Natural killer cell (primary cell): ENCODE measurements at regions of chrX and their contacts with region 1.

Region 1: GRCh38 chrX:118603981-118604380 is 108.4 kb downstream of the DOCK11 start:
- DNase-seq: peak; percentile 14 to 68
- ATAC-seq: peak; percentile 69 to 83 (median 69)
- H3K4me3 ChIP-seq: no peak overlapping the region
- H3K4me3 Mint-ChIP-seq: no peak overlapping the region
- H3K27ac ChIP-seq: no peak overlapping the region
- H3K27ac Mint-ChIP-seq: peak overlapping the region; percentile 45 to 85
- H3K4me1 ChIP-seq: no peaks in the 10 kb centered on the region
- H3K4me1 Mint-ChIP-seq: peaks cover 8 to 21% of the 10 kb centered on the region in 2 donors
- H3K27me3 ChIP-seq: no peaks in the 10 kb centered on the region
- H3K27me3 Mint-ChIP-seq: no peaks in the 10 kb centered on the region
- CTCF ChIP-seq: peak; percentile 66

Region 2: DNA sequence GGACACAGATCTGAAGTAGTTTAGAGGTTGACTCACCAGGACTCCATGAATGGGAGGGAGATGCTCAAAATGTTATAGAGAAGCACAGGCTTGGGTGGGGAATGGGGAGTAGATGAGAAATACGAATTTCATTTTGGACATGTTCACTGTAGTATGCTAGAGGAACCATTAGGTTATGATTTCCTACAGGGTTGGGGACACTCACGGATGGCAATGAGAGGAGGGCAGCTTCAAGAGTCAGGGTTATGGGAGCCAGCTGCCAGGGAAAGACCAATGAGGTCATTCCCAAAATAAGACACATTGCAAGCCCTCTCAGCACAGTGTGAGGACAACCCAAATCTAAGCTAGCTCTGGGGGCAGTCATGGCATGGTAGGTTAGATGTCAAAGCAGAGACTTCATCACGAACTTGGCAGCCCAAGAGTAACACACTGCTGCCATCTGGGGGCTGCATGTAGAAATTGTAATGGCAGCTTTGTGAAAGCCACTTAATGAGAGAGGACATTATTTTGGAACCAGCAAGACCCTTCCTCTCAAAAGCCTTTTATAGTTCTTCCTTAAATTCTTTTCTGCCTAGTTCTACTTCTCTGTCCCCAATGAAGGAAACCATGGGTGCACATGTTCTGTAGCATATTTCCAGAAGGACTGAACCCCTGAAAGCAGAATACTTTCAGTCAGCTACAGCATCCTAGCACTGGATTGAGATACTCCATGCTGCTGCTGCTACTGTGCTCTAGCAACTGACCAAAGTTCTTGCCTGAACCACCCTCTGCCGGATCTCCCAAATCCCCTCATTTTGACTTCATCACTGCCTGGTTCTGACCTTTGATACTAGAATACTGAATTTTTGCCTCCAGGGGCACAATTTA is 203.4 kb after region 1 on chrX:
- intact Hi-C with region 1: loop called (anchors 10 kb)
- DNase-seq: peak in 1 of 2 donors; percentile 62
- ATAC-seq: peak in 2 of 3 donors; percentile 42 to 67
- H3K4me3 ChIP-seq: no peak overlapping the region
- H3K4me3 Mint-ChIP-seq: no peak overlapping the region
- H3K27ac ChIP-seq: no peak overlapping the region
- H3K27ac Mint-ChIP-seq: no peak overlapping the region
- H3K4me1 ChIP-seq: no peaks in the 10 kb centered on the region
- H3K4me1 Mint-ChIP-seq: no peaks in the 10 kb centered on the region
- H3K27me3 ChIP-seq: no peaks in the 10 kb centered on the region
- H3K27me3 Mint-ChIP-seq: peaks cover 7 to 26% of the 10 kb centered on the region in 2 donors
- CTCF ChIP-seq: peak; percentile 4

Region 3: DNA sequence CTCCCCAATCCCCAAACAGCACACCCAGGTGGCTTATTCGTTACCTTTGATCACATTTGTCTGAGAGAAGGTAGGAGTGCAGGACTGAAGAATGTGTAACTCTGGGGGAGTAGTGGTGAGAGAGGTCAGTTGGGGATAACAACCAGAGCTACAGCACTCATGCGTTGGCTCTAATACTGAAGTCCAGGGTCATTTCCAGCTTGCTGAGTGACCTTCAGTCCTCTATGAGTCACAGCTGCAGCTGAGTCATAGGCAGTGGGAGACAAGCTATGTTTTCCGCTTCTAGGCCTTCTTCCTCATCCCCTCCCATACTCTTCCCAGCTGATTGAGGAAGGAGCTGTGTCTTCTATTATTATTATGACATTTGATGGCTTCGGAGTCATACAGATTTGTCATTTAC is 437.2 kb after region 1 on chrX:
- intact Hi-C with region 1: no loop called
- DNase-seq: no peak
- ATAC-seq: no peak
- H3K4me3 ChIP-seq: no peak overlapping the region
- H3K4me3 Mint-ChIP-seq: no peak overlapping the region
- H3K27ac ChIP-seq: no peak overlapping the region
- H3K27ac Mint-ChIP-seq: no peak overlapping the region
- H3K4me1 ChIP-seq: no peaks in the 10 kb centered on the region
- H3K4me1 Mint-ChIP-seq: no peaks in the 10 kb centered on the region
- H3K27me3 ChIP-seq: no peaks in the 10 kb centered on the region
- H3K27me3 Mint-ChIP-seq: peaks cover 0 to 5% of the 10 kb centered on the region in 2 donors
- CTCF ChIP-seq: no peak